Right lobe of liver (tissue), 6 donors: ENCODE measurements at regions of chr1 and their contacts with region 1.

Region 1: GRCh38 chr1:203861379-203862184 is at the start of gene SNRPE:
- DNase-seq: peak; percentile 94 to 97 (median 97)
- ATAC-seq: peak; percentile 94 to 99 (median 97)
- H3K4me3 ChIP-seq: peak within 1 kb of the TSS; percentile 78 to 84 (median 79)
- H3K27ac ChIP-seq: peak within 1 kb of the TSS; percentile 23 to 91 (median 68)
- H3K4me1 ChIP-seq: peaks cover 0 to 22% (median 5%) of the 10 kb centered on the region in 4 donors
- H3K27me3 ChIP-seq: no peaks in the 10 kb centered on the region
- CTCF ChIP-seq: peak; percentile 89 to 98 (median 95)
- POLR2A ChIP-seq: peak; percentile 58
- total RNA-seq, gene SNRPE: 17.0 to 46.2 (median 36.5) TPM

Region 2: DNA sequence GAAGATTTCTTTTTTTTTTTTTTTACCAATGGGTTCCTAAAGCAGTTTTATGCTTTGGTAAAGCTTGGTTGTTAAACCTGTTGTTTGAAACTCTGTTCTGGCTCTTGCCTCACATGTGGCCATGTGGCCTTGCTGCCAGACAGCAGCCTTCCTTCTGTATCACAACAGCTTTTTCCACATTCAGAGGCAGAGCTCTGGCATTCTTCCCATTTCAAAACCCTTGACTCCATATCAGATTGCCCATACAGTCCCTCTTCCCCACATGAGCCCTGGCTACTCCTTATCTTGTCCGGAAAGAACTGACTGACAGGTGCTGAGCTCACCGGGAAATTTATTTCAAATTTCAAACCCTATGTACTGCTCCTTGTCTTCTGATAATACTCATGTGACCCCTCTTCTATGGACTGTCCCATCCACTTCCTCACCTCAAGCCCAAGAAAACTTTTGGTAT is 135.1 kb before region 1 on chr1:
- intact Hi-C with region 1: no loop called
- DNase-seq: no peak
- ATAC-seq: no peak
- H3K4me3 ChIP-seq: no peak overlapping the region
- H3K27ac ChIP-seq: no peak overlapping the region
- H3K4me1 ChIP-seq: no peaks in the 10 kb centered on the region
- H3K27me3 ChIP-seq: no peaks in the 10 kb centered on the region
- CTCF ChIP-seq: no peak
- POLR2A ChIP-seq: no peak

Region 3: GRCh38 chr1:204151552-204152309 is 290.1 kb after region 1 on chr1 and contains the start of gene ETNK2:
- intact Hi-C with region 1: loop called in 1 of 2 experiments (anchors 10 kb)
- DNase-seq: peak; percentile 58 to 90 (median 87)
- ATAC-seq: peak; percentile 54 to 72 (median 61)
- H3K4me3 ChIP-seq: peak within 1 kb of the TSS; percentile 70 to 98 (median 87)
- H3K27ac ChIP-seq: peak within 1 kb of the TSS in 2 of 3 donors; percentile 86 to 89
- H3K4me1 ChIP-seq: peaks cover 0 to 18% (median 3%) of the 10 kb centered on the region in 4 donors
- H3K27me3 ChIP-seq: no peaks in the 10 kb centered on the region
- CTCF ChIP-seq: no peak
- POLR2A ChIP-seq: peak; percentile 34
- total RNA-seq, gene ETNK2: 30.9 to 231 (median 98.9) TPM